ENCODE measurements at regions of chr11 and their contacts with region 1.

Region 1: GRCh38 chr11:16738193-16738946 is at the start of gene C11orf58:
- DNase-seq: peak; percentile 97
- H3K4me3 Mint-ChIP-seq: peak within 1 kb of the TSS; percentile 73
- H3K27ac Mint-ChIP-seq: no peak within 1 kb of the TSS
- H3K4me1 Mint-ChIP-seq: peaks cover 20% of the 10 kb centered on the region
- H3K27me3 Mint-ChIP-seq: no peaks in the 10 kb centered on the region
- total RNA-seq, gene C11orf58: 119 to 137 TPM

Region 2: DNA sequence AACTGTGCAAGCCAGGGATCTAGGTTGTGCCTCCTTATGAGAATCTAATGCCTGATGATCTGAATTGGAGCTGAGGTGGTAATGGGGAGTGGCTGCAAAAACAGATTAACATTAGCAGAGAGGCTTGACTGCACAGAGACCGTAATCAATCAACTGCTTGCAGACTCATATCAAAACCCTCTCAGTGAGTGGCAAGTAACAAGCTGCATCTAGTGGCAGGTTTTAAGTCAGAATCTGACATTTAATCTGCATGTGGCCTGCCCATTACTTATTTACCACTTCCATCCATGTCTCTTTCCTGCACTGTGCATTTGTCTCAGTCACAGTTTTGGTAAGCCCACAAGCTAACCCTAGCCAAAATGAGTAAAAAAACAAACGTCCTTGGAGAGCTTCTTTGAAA is 11.3 kb after region 1 on chr11:
- CTCF ChIA-PET with region 1: interaction called, 11 read pairs
- POLR2A ChIA-PET with region 1: interaction called, 3 read pairs
- DNase-seq: no peak
- H3K4me3 Mint-ChIP-seq: no peak overlapping the region
- H3K27ac Mint-ChIP-seq: no peak overlapping the region
- H3K4me1 Mint-ChIP-seq: peaks cover 22% of the 10 kb centered on the region
- H3K27me3 Mint-ChIP-seq: no peaks in the 10 kb centered on the region

Region 3: GRCh38 chr11:16791191-16791961 is 53.0 kb after region 1 on chr11:
- CTCF ChIA-PET with region 1: no interaction called
- POLR2A ChIA-PET with region 1: no interaction called
- DNase-seq: no peak
- H3K4me3 Mint-ChIP-seq: no peak overlapping the region
- H3K27ac Mint-ChIP-seq: no peak overlapping the region
- H3K4me1 Mint-ChIP-seq: peaks cover 10% of the 10 kb centered on the region
- H3K27me3 Mint-ChIP-seq: no peaks in the 10 kb centered on the region

Measured in activated CD4-positive, alpha-beta T cell treated with anti-CD3 and anti-CD28 coated beads, Interleukin-2, amount 10 ng/mL, durations not matched to agents 7 days and 5 days (primary cell).